CD8-positive, alpha-beta T cell (primary cell): ENCODE measurements at regions of chr17 and their contacts with region 1.

Region 1: DNA sequence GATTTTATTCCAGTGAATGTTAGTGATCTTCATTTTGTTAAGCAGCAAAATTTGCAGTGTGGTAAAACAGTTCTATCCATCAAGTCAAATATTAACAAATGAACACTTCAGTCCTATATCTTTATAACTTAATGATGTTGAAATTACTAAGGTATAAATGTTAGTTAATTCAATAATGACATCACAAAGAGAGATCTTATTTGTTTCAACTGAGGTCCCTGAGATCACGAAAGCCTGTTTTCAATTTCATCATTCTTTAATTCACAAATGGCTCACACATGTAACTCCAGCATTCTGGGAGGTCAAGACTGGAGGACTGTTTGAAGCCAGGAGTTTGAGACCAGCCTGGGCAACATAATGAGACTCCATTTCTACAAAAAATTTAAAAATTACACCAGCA is 13.9 kb downstream of the SMURF2 start:
- DNase-seq: no peak
- ATAC-seq: no peak
- H3K4me3 ChIP-seq: no peak overlapping the region
- H3K4me3 Mint-ChIP-seq: no peak overlapping the region
- H3K27ac ChIP-seq: no peak overlapping the region
- H3K27ac Mint-ChIP-seq: no peak overlapping the region
- H3K4me1 ChIP-seq: peaks cover 7% of the 10 kb centered on the region
- H3K4me1 Mint-ChIP-seq: peaks cover 51% of the 10 kb centered on the region
- H3K27me3 ChIP-seq: no peaks in the 10 kb centered on the region
- H3K27me3 Mint-ChIP-seq: no peaks in the 10 kb centered on the region
- CTCF ChIP-seq: no peak

Region 2: DNA sequence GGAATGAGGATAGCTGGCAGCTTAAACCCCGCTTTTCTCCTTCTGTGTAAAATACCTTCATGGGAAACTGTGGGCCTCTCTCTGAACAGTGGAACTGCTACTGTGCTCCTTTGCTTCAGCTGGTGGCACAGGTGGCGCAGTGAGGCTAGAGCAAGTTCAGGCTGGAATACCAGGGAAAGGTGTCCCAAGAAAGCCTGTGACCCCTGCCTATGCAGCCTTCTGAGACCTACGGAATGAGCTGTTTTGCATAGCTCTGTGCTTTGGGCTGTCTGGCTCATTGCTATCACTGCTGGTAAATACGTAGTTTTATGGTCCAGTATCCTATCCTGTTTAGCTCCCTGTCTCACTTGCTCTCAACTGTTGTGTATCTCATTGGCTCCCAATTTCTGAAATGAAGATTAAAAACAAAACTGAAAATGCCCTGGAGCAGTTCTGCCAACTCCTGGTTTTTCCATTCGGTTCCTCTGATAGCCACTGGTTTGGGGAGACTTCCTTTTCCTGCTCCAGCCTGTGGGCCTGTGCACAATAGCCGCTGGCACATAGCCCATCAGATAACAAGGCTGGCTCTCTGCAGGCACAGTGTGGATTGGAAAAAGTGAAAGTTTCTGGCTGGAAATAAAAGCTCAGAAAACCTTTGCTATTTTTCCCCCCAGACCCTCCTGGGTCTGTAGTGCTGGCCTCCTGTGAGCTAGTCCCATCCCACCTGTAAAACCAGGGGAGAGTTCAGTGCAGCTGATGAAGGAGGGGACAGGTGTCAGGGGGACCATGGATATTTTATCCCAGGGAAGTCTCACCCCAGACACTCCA is 972.4 kb before region 1 on chr17:
- CTCF ChIA-PET with region 1: no interaction called
- POLR2A ChIA-PET with region 1: no interaction called
- intact Hi-C with region 1: no loop called
- DNase-seq: no peak
- ATAC-seq: no peak
- H3K4me3 ChIP-seq: no peak overlapping the region
- H3K4me3 Mint-ChIP-seq: no peak overlapping the region
- H3K27ac ChIP-seq: no peak overlapping the region
- H3K27ac Mint-ChIP-seq: peak overlapping the region; percentile 32
- H3K4me1 ChIP-seq: no peaks in the 10 kb centered on the region
- H3K4me1 Mint-ChIP-seq: peaks cover 19% of the 10 kb centered on the region
- H3K27me3 ChIP-seq: no peaks in the 10 kb centered on the region
- H3K27me3 Mint-ChIP-seq: no peaks in the 10 kb centered on the region
- CTCF ChIP-seq: no peak

Region 3: DNA sequence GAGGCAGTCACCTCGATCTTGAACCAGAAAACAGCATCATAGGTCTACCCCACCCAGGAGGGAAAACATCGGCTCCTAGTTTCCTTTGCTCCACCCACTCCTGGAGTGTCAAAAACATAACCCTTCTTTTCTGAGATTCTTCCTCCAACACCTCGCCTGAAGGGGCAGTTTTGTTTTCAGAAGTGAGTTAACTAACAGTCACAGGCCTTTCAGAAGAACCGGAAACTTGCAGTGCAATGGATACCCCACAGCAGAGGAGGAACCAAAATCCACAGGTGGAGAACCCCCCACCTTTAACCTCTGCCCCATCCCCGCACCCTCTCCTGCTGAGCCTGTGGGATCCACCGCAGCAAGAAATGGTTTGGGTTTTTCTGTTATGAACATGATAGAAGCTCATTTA is 377.3 kb before region 1 on chr17:
- CTCF ChIA-PET with region 1: no interaction called
- POLR2A ChIA-PET with region 1: no interaction called
- intact Hi-C with region 1: no loop called
- DNase-seq: peak in 1 of 9 experiments; percentile 22
- ATAC-seq: no peak
- H3K4me3 ChIP-seq: peak overlapping the region in 1 of 2 experiments; percentile 16
- H3K4me3 Mint-ChIP-seq: peak overlapping the region; percentile 49
- H3K27ac ChIP-seq: peak overlapping the region in 1 of 2 experiments; percentile 65
- H3K27ac Mint-ChIP-seq: peak overlapping the region; percentile 82
- H3K4me1 ChIP-seq: peaks cover 10% of the 10 kb centered on the region
- H3K4me1 Mint-ChIP-seq: peaks cover 21% of the 10 kb centered on the region
- H3K27me3 ChIP-seq: no peaks in the 10 kb centered on the region
- H3K27me3 Mint-ChIP-seq: peaks cover 4% of the 10 kb centered on the region
- CTCF ChIP-seq: no peak

Region 4: GRCh38 chr17:64534175-64534574 is 114.1 kb before region 1 on chr17:
- CTCF ChIA-PET with region 1: interaction called, 12 read pairs
- POLR2A ChIA-PET with region 1: no interaction called
- intact Hi-C with region 1: no loop called
- DNase-seq: peak in 2 of 9 experiments; percentile 11 to 24
- ATAC-seq: peak; percentile 34
- H3K4me3 ChIP-seq: no peak overlapping the region
- H3K4me3 Mint-ChIP-seq: no peak overlapping the region
- H3K27ac ChIP-seq: no peak overlapping the region
- H3K27ac Mint-ChIP-seq: no peak overlapping the region
- H3K4me1 ChIP-seq: no peaks in the 10 kb centered on the region
- H3K4me1 Mint-ChIP-seq: no peaks in the 10 kb centered on the region
- H3K27me3 ChIP-seq: no peaks in the 10 kb centered on the region
- H3K27me3 Mint-ChIP-seq: no peaks in the 10 kb centered on the region
- CTCF ChIP-seq: no peak

Region 5: GRCh38 chr17:64564098-64564497 is 84.1 kb before region 1 on chr17:
- CTCF ChIA-PET with region 1: interaction called, 9 read pairs
- POLR2A ChIA-PET with region 1: no interaction called
- intact Hi-C with region 1: loop called in 1 of 2 experiments (anchors 5 kb)
- DNase-seq: no peak
- ATAC-seq: no peak
- H3K4me3 ChIP-seq: no peak overlapping the region
- H3K4me3 Mint-ChIP-seq: no peak overlapping the region
- H3K27ac ChIP-seq: no peak overlapping the region
- H3K27ac Mint-ChIP-seq: peak overlapping the region; percentile 53
- H3K4me1 ChIP-seq: no peaks in the 10 kb centered on the region
- H3K4me1 Mint-ChIP-seq: no peaks in the 10 kb centered on the region
- H3K27me3 ChIP-seq: no peaks in the 10 kb centered on the region
- H3K27me3 Mint-ChIP-seq: no peaks in the 10 kb centered on the region
- CTCF ChIP-seq: no peak

Region 6: DNA sequence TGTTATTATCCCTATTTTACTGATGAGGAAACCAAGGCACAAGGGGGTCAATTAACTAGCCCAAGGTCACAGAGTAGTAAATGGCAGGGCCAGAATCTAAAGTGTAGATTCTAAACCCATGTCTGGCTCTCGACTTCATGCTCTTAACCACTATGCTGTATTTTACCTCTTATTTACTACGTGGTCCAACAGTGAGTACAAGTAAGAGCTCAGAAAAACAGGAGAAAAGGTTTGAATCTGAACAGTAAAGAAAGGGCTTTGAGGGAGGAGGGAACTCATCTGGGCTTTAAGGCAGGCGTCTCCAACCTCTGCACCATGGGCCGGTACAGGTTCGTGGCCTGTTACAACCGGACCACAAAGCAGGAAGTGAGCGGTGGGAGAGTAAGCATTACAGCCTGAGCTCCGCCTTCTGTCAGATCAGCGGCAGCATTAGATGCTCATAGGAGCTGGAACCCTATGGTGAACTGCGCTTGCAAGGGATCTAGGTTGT is 49.0 kb before region 1 on chr17:
- CTCF ChIA-PET with region 1: interaction called, 8 read pairs
- POLR2A ChIA-PET with region 1: no interaction called
- intact Hi-C with region 1: loop called (anchors 5 kb)
- DNase-seq: peak; percentile 13 to 77 (median 60)
- ATAC-seq: peak; percentile 95
- H3K4me3 ChIP-seq: peak overlapping the region in 1 of 2 experiments; percentile 2
- H3K4me3 Mint-ChIP-seq: peak overlapping the region; percentile 72
- H3K27ac ChIP-seq: peak overlapping the region in 1 of 2 experiments; percentile 69
- H3K27ac Mint-ChIP-seq: peak overlapping the region; percentile 94
- H3K4me1 ChIP-seq: peaks cover 16% of the 10 kb centered on the region
- H3K4me1 Mint-ChIP-seq: peaks cover 42% of the 10 kb centered on the region
- H3K27me3 ChIP-seq: no peaks in the 10 kb centered on the region
- H3K27me3 Mint-ChIP-seq: no peaks in the 10 kb centered on the region
- CTCF ChIP-seq: no peak

Region 7: GRCh38 chr17:64611369-64611768 is 36.9 kb before region 1 on chr17:
- CTCF ChIA-PET with region 1: no interaction called
- POLR2A ChIA-PET with region 1: no interaction called
- intact Hi-C with region 1: no loop called
- DNase-seq: no peak
- ATAC-seq: no peak
- H3K4me3 ChIP-seq: no peak overlapping the region
- H3K4me3 Mint-ChIP-seq: no peak overlapping the region
- H3K27ac ChIP-seq: no peak overlapping the region
- H3K27ac Mint-ChIP-seq: no peak overlapping the region
- H3K4me1 ChIP-seq: peaks cover 18% of the 10 kb centered on the region
- H3K4me1 Mint-ChIP-seq: peaks cover 48% of the 10 kb centered on the region
- H3K27me3 ChIP-seq: no peaks in the 10 kb centered on the region
- H3K27me3 Mint-ChIP-seq: no peaks in the 10 kb centered on the region
- CTCF ChIP-seq: no peak